ENCODE measurements at regions of chr16 and their contacts with region 1.

Region 1: GRCh38 chr16:87492721-87493607 is at the start of gene ZCCHC14:
- DNase-seq: peak; percentile 99 to 100
- H3K4me3 ChIP-seq: peak within 1 kb of the TSS; percentile 64 to 68
- H3K27ac ChIP-seq: peak within 1 kb of the TSS; percentile 73
- H3K4me1 ChIP-seq: peaks cover 0 to 46% (median 37%) of the 10 kb centered on the region in 4 donors
- H3K27me3 ChIP-seq: no peaks in the 10 kb centered on the region
- CTCF ChIP-seq: peak in 1 of 2 experiments; percentile 21

Region 2: DNA sequence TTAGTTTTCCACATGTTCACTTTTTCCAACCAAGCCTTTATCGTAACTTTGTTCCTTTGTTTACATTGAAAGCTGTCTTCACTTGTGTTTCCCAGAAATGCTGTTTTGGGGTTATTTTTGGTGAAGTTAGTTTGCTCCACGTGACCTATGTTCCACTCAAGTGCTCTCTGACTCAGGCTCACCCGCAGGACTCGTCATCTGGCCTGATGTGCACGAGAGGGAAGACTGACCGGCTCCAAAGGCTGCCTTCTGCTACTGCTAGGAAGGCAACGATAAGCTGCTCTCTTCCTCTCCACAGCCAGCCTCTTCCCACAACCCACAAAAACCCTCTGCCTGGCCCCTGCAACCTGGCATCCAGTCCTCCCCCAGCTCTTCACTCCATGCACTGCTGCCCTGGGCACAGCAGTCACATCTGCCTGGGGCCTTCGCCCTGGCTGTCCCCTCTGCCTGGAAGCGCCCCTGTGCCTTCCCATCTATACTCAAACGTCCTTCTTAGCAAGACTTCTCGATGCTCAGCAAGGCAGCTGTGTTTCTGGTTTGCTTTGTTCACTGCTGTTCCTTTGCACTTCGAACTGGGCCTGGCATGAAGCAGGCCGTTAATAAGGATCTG is 28.2 kb before region 1 on chr16:
- intact Hi-C with region 1: loop called (anchors 1 kb)
- DNase-seq: peak; percentile 93 to 94
- H3K4me3 ChIP-seq: peak overlapping the region; percentile 29 to 37
- H3K27ac ChIP-seq: peak overlapping the region; percentile 92 to 93
- H3K4me1 ChIP-seq: peaks cover 0 to 76% (median 55%) of the 10 kb centered on the region in 4 donors
- H3K27me3 ChIP-seq: no peaks in the 10 kb centered on the region
- CTCF ChIP-seq: peak in 1 of 2 experiments; percentile 12

Region 3: GRCh38 chr16:88102597-88102996 is 609.6 kb after region 1 on chr16:
- intact Hi-C with region 1: no loop called
- DNase-seq: no peak
- H3K4me3 ChIP-seq: no peak overlapping the region
- H3K27ac ChIP-seq: no peak overlapping the region
- H3K4me1 ChIP-seq: no peaks in the 10 kb centered on the region
- H3K27me3 ChIP-seq: peaks cover 0 to 42% of the 10 kb centered on the region in 2 donors
- CTCF ChIP-seq: no peak

Measured in tibial artery (tissue), 4 donors.